CD4-positive, alpha-beta memory T cell (primary cell): ENCODE measurements at regions of chr2 and their contacts with region 1.

Region 1: DNA sequence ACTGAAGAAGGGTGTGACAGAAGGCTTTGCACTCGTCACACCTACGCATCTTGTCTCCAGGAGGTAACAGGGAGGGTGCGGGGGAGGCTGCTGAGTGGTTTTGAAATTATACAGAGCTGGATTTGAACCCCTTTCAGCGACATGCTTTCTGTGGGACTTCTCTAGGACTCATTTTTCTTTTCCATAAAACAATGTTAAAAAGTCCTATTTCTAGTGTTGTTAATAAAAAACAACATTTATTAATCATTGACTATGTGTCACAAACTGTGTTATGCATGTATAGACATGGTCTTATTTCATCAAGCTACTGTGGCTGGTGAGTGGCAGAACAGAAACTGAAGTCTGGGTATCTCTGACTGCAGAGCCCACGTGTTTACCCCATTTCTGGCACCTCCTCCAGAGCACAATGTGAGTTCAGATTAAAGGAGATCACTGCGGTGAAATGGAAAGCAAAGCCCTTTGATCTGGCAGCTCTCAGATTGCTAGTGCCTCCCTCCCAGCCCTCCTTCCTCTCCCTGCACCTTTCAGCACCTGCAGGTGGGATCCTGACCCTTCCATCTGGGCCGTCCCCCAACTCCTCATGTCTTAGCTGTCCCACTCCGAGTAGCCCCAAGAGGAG is 315.5 kb upstream of the MYT1L start:
- DNase-seq: peak; percentile 22 to 60 (median 50)
- H3K4me3 ChIP-seq: no peak overlapping the region
- H3K4me3 Mint-ChIP-seq: peak overlapping the region in 7 of 8 donors; percentile 32 to 71 (median 59)
- H3K27ac ChIP-seq: no peak overlapping the region
- H3K27ac Mint-ChIP-seq: peak overlapping the region; percentile 24 to 84 (median 59)
- H3K4me1 ChIP-seq: peaks cover 11% of the 10 kb centered on the region
- H3K4me1 Mint-ChIP-seq: peaks cover 7 to 16% (median 9%) of the 10 kb centered on the region in 4 donors
- H3K27me3 ChIP-seq: no peaks in the 10 kb centered on the region
- H3K27me3 Mint-ChIP-seq: peaks cover 0 to 5% of the 10 kb centered on the region in 2 donors

Region 2: GRCh38 chr2:2456721-2457120 is 189.8 kb before region 1 on chr2:
- CTCF ChIA-PET with region 1: no interaction called
- POLR2A ChIA-PET with region 1: no interaction called
- intact Hi-C with region 1: no loop called
- DNase-seq: no peak
- H3K4me3 ChIP-seq: no peak overlapping the region
- H3K4me3 Mint-ChIP-seq: no peak overlapping the region
- H3K27ac ChIP-seq: no peak overlapping the region
- H3K27ac Mint-ChIP-seq: no peak overlapping the region
- H3K4me1 ChIP-seq: no peaks in the 10 kb centered on the region
- H3K4me1 Mint-ChIP-seq: no peaks in the 10 kb centered on the region
- H3K27me3 ChIP-seq: no peaks in the 10 kb centered on the region
- H3K27me3 Mint-ChIP-seq: no peaks in the 10 kb centered on the region

Region 3: DNA sequence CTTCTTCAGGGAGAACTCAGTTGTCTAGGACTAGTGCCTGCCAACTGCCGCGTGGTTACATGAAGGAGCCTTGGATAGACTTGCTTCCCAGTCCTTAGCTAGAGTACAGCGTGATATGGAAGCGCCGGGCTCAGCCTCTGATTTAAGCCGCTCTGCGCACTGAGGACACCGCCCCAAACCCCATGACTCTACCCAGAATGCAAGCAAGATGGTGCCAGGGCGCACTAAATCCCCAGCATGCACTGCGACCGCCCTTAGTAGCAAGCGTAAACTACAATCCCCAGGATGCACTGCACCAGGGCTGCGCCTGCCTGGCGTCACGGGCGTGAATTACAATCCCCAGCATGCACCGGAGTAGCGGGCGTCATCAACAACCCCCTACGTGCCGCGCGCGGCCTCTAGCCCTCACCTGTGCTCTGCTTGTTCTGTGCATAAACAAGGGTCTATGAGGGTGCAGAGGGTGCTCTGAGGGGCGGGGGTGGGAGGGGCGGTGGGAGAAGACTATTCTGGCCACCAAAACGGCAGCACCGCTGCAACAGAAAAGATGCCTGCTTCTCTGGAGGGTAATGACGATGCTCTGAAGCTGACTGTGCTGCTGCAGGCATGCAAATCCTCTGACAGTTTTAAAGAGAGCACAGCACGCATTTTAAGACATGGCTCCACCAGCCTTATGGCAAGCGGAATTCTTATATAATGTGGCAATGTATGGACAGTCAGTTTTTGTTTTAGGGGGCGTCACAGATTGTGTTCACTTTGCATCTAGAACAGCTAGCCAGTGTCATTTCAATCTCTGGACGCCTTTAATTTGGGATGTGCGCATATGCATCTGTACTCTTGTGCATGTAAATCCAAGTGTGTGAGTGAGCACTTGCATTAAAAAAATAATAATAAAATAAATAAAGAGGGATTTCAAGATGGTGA is 33.0 kb before region 1 on chr2:
- CTCF ChIA-PET with region 1: no interaction called
- POLR2A ChIA-PET with region 1: interaction called, 4 read pairs
- intact Hi-C with region 1: loop called (anchors 1 kb)
- DNase-seq: peak; percentile 77 to 87 (median 85)
- H3K4me3 ChIP-seq: peak overlapping the region in 1 of 2 donors; percentile 54
- H3K4me3 Mint-ChIP-seq: peak overlapping the region; percentile 73 to 84 (median 78)
- H3K27ac ChIP-seq: peak overlapping the region; percentile 26
- H3K27ac Mint-ChIP-seq: peak overlapping the region; percentile 46 to 87 (median 73)
- H3K4me1 ChIP-seq: peaks cover 5% of the 10 kb centered on the region
- H3K4me1 Mint-ChIP-seq: peaks cover 6 to 9% (median 7%) of the 10 kb centered on the region in 4 donors
- H3K27me3 ChIP-seq: no peaks in the 10 kb centered on the region
- H3K27me3 Mint-ChIP-seq: peaks cover 3 to 7% of the 10 kb centered on the region in 2 donors

Region 4: GRCh38 chr2:3207091-3207491 is 560.5 kb after region 1 on chr2:
- CTCF ChIA-PET with region 1: no interaction called
- POLR2A ChIA-PET with region 1: no interaction called
- intact Hi-C with region 1: no loop called
- DNase-seq: no peak
- H3K4me3 ChIP-seq: no peak overlapping the region
- H3K4me3 Mint-ChIP-seq: no peak overlapping the region
- H3K27ac ChIP-seq: no peak overlapping the region
- H3K27ac Mint-ChIP-seq: no peak overlapping the region
- H3K4me1 ChIP-seq: no peaks in the 10 kb centered on the region
- H3K4me1 Mint-ChIP-seq: peaks cover 0 to 6% (median 2%) of the 10 kb centered on the region in 4 donors
- H3K27me3 ChIP-seq: no peaks in the 10 kb centered on the region
- H3K27me3 Mint-ChIP-seq: no peaks in the 10 kb centered on the region